Panc1 (cell line): ENCODE measurements at regions of chr15 and their contacts with region 1.

Region 1: GRCh38 chr15:77747175-77748077 is 114.7 kb upstream of the LINGO1 start:
- DNase-seq: no peak
- ATAC-seq: peak; percentile 45
- H3K4me3 ChIP-seq: peak overlapping the region in 1 of 2 experiments; percentile 19; a peak in 1 of 4 replicates
- H3K27ac ChIP-seq: no peak overlapping the region
- H3K4me1 ChIP-seq: peaks cover 3% of the 10 kb centered on the region; the same call in 1 of the 2 replicates
- H3K27me3 ChIP-seq: no peaks in the 10 kb centered on the region
- CTCF ChIP-seq: no peak

Region 2: DNA sequence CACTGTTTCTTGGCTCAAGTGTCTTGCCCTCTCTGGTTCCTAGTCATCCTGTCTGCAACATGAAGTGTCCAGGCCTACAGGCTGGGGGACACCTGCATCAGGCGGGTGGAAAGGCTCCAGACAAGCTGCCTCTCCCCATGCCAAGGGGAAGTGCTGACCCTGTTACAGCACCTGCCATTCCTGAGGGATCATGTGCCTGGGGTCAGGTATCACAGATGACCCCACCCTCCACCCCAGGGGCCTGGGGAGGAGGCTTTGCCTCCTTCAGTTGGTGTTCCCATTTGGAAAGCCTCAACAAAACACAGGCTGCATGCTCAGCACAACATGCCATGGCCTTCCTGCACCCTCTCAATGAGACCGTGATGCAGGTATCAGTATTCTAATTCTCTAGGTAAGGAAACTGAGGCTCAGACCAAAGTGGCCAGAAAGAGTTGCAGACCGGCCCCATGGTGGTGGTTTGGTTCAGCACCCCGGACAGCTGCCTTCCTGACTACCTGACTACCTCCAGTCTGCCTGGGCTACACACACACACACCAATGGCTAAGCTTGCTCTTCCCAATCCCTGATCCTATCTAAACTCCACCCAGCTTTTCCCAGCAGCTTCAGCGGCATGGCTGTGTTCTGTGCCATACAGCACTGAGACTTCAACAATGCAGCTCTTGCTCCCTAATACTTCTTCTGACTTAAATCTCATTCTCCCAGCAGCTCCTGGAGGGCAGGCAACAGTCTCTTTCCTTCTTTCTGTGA is 45.0 kb before region 1 on chr15:
- CTCF ChIA-PET with region 1: interaction called, 14 read pairs
- POLR2A ChIA-PET with region 1: interaction called, 3 read pairs
- in situ Hi-C with region 1: no loop called
- intact Hi-C with region 1: no loop called
- DNase-seq: no peak
- ATAC-seq: peak; percentile 45; the same call in 1 of the 2 replicates
- H3K4me3 ChIP-seq: no peak overlapping the region
- H3K27ac ChIP-seq: no peak overlapping the region
- H3K4me1 ChIP-seq: no peaks in the 10 kb centered on the region
- H3K27me3 ChIP-seq: no peaks in the 10 kb centered on the region
- CTCF ChIP-seq: no peak

Region 3: DNA sequence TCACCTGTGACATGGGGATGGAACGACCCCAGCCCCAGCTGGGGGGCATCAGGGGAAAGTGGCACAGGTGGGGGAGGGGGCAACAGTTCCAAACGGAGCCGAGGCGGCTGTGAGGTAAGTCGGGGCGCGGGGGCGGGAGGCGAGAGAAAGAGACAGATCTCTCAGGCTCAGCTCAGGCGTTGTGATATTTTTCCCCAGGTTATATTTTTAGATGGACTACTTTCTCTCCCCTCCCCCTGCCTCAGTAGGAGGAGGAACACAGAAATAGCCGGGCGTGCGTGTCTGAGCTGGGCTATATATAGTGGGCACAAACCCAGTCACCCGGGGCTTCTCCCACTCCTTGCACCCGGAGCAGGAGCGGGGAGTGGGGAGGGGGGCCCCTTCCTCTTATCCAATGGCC is 23.7 kb before region 1 on chr15:
- CTCF ChIA-PET with region 1: no interaction called
- POLR2A ChIA-PET with region 1: interaction called, 11 read pairs
- in situ Hi-C with region 1: no loop called
- intact Hi-C with region 1: no loop called
- DNase-seq: no peak
- ATAC-seq: no peak
- H3K4me3 ChIP-seq: no peak overlapping the region
- H3K27ac ChIP-seq: no peak overlapping the region
- H3K4me1 ChIP-seq: no peaks in the 10 kb centered on the region
- H3K27me3 ChIP-seq: no peaks in the 10 kb centered on the region
- CTCF ChIP-seq: no peak

Region 4: DNA sequence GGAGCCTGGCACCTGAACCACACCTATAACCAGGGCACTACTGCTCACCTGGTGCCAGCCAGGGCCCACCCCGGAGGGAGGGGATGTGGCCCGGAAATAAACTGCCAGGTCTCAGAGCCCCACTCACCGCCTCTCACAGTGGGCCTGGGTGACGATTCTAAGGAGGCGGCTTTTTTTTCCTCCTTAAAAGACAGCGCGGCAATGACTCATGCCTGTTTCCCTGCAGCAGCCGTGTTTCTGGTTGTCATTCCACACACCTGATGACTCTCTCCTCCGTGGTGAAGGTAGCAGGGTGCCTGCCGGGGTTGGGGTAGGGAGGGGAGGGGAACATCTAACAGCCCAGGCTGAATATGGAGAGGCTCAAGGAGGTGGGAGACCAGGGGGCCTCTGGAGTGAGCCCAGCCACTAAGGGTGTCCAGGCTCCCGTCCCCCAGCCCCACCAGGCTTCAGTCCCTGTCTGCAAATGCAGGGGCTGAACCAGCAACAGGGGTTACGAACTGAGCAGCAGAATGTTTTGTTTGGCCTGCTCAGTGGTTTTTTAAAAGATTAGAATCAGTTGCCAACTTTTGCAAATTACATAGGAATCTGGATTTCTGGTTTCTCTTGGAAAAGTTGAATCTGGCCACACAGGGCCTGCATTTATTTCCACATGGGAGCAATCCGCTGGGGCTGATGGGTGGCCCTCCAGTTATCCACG is 12.6 kb after region 1 on chr15:
- CTCF ChIA-PET with region 1: no interaction called
- POLR2A ChIA-PET with region 1: no interaction called
- in situ Hi-C with region 1: no loop called
- intact Hi-C with region 1: no loop called
- DNase-seq: no peak
- ATAC-seq: peak; percentile 22; the same call in 1 of the 2 replicates
- H3K4me3 ChIP-seq: no peak overlapping the region
- H3K27ac ChIP-seq: no peak overlapping the region
- H3K4me1 ChIP-seq: no peaks in the 10 kb centered on the region; the same call in 1 of the 2 replicates
- H3K27me3 ChIP-seq: no peaks in the 10 kb centered on the region
- CTCF ChIP-seq: no peak